Heart right ventricle (tissue), 16 donors: ENCODE measurements at regions of chr5 and their contacts with region 1.

Region 1: GRCh38 chr5:171288066-171288465 is 21.0 kb upstream of the TLX3 start:
- DNase-seq: no peak
- ATAC-seq: no peak
- H3K4me3 ChIP-seq: no peak overlapping the region
- H3K27ac ChIP-seq: no peak overlapping the region
- H3K4me1 ChIP-seq: no peaks in the 10 kb centered on the region
- H3K27me3 ChIP-seq: no peaks in the 10 kb centered on the region
- CTCF ChIP-seq: no peak

Region 2: DNA sequence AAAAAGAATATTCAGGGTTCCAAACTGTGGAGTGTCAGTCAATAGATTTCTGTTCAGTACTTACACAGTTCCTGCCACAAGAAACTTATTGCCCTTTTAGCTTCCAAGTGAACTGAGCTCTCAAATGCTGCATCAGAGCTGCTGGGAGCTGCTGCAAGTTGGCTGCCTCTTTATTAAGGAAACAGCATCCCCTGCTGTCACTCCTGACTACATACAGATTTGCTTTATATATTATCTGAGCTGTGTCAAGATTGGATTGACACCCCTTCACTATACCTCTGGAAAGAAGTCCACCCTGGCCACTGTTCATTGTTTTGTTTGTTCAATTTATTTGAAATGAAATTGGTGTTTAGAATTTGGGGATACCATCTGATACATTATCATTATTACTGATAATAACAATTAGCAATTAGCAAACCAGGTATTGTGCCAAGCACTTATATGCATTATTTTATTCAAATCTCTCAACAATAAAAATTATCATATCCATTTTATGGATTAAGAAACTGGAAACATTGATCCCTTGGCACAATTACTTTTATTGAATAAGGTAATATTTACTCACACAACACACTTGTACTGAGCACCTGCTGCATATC is 1071.7 kb before region 1 on chr5:
- intact Hi-C with region 1: loop called in 1 of 10 experiments (anchors 5 kb)
- DNase-seq: peak in 1 of 2 donors; percentile 23
- ATAC-seq: peak in 2 of 8 donors; percentile 41 to 55
- H3K4me3 ChIP-seq: no peak overlapping the region
- H3K27ac ChIP-seq: no peak overlapping the region
- H3K4me1 ChIP-seq: peaks cover 0 to 6% (median 0%) of the 10 kb centered on the region in 9 donors
- H3K27me3 ChIP-seq: peaks cover 0 to 9% (median 0%) of the 10 kb centered on the region in 7 donors
- CTCF ChIP-seq: peak in 8 of 9 donors; percentile 18 to 61 (median 55)

Region 3: DNA sequence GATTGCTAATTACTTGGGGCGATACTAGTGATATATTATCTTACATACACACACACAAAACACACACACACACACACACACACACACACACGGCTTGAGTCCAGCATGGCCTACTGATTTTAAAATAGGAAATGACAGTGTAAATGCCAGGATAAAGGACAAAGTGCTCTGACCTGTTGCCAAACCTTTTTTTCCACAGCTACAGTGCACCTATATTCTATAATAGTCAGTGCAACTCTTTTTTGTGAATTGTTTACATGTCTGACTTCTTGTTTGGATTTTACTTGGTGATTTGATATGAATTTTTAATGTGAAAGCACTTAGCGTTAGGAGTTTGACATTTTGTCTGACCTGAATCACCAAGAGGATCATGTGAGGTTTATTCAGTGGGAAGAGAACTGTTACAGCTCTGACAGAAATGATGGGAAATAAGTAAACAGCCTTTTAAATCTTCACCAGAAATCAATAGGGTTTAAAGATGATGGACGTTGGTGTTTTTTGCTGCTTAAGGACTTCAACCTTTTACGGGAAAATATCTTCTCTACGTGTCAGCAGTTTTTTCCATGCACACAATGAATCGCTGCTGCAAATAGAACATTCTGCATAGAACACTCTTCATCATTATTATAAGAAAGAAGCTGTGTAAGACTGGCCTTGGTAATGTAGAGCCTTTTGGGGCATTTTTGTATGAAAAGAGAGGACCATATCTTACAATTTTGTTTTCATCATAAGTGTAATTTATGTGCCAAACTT is 207.7 kb before region 1 on chr5:
- intact Hi-C with region 1: loop called in 1 of 10 experiments (anchors 5 kb)
- DNase-seq: no peak
- ATAC-seq: no peak
- H3K4me3 ChIP-seq: no peak overlapping the region
- H3K27ac ChIP-seq: no peak overlapping the region
- H3K4me1 ChIP-seq: no peaks in the 10 kb centered on the region
- H3K27me3 ChIP-seq: no peaks in the 10 kb centered on the region
- CTCF ChIP-seq: no peak

Region 4: GRCh38 chr5:171120986-171121622 is 167.0 kb before region 1 on chr5:
- intact Hi-C with region 1: no loop called
- DNase-seq: no peak
- ATAC-seq: no peak
- H3K4me3 ChIP-seq: no peak overlapping the region
- H3K27ac ChIP-seq: no peak overlapping the region
- H3K4me1 ChIP-seq: no peaks in the 10 kb centered on the region
- H3K27me3 ChIP-seq: no peaks in the 10 kb centered on the region
- CTCF ChIP-seq: no peak